ENCODE measurements at regions of chr22 and their contacts with region 1.

Region 1: DNA sequence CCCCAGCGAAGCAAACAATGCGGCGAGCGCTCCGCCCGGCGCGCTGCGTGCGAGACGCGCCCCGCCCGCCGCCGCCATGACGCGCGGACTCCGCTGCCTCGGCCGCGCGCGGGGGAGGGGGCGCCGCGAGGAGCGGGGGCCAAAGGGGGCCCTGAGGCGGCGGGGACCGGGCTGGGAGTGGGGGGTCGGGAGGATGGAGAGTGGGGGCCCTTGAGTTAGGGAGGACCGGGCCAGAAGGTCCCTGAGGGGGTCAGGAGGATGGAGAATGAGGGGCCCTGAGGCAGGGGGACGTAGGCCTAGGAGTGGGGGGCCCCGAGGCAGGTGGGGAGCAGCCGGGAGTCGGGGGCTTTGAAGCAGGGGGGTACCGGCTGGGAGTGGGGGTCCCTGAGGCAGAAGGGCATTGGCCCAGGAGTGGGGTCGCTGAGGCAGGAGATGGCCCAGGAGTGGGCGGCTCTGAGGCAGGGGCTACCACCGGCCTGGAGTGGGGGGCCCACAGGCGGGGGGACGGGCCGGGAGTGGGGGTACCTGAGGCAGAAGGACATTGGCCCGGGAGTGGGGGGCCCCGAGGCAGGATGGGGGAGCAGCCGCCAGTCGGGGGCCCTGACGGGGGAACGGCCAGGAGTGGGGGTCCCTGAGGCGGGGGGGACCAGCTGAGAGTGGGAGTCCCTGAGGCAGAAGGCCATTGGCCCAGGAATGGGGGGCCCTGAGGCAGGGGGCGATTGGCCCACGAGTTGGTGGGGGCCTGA is at the start of gene BRD1:
- DNase-seq: peak; percentile 46
- H3K4me3 Mint-ChIP-seq: peak within 1 kb of the TSS; percentile 91
- H3K27ac Mint-ChIP-seq: peak within 1 kb of the TSS; percentile 89
- H3K4me1 Mint-ChIP-seq: peaks cover 40% of the 10 kb centered on the region
- H3K27me3 Mint-ChIP-seq: no peaks in the 10 kb centered on the region
- total RNA-seq, gene BRD1: 41.3 and 46.2 TPM in 2 replicates

Region 2: DNA sequence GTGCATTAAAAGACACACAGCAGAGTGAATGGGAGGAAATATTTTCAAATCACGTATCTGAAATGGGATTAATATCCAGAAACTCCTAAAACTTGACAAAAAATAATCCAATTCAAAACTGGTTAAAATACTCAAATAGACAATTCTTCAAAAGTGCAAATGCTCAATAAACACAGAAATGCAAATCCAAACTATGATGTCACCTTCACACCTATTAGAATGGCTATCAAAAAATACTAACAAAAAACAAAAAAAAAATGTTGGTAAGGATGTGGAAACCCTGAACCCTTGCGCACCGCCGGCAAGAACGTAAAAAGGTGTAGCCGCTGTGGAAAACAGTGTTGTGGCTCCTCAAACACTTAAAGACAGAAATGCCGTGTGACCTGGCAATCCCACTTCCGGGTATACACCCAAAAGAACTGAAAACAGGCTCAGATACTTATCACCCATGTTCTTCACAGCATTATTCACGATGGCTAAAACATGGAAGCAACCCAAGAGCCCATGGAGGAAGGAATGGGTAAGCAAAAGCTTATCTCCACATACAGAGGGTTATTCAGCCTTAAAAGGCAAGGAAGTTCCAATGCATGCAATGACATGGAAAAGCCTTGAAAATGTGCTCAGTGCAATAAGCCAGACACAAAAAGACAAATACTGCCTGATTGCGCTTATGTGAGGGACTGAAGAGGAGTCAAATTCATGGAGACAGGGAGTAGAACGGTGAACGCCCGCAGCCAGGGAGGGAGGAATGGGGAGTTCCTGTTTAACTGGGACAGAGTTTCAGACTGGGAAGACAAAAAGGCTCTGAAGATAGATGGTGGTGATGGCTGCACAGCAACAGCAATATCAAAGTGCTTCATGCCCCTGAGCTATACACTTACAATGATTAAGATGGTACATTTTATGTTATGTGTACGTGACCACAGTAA is 20.0 kb before region 1 on chr22:
- intact Hi-C with region 1: no loop called
- DNase-seq: peak; percentile 60
- H3K4me3 Mint-ChIP-seq: peak overlapping the region; percentile 11
- H3K27ac Mint-ChIP-seq: peak overlapping the region; percentile 66
- H3K4me1 Mint-ChIP-seq: peaks cover 59% of the 10 kb centered on the region
- H3K27me3 Mint-ChIP-seq: no peaks in the 10 kb centered on the region

Region 3: GRCh38 chr22:49867303-49868265 is 39.6 kb after region 1 on chr22:
- intact Hi-C with region 1: loop called (anchors 5 kb)
- DNase-seq: no peak
- H3K4me3 Mint-ChIP-seq: peak overlapping the region; percentile 42
- H3K27ac Mint-ChIP-seq: peak overlapping the region; percentile 91
- H3K4me1 Mint-ChIP-seq: peaks cover 57% of the 10 kb centered on the region
- H3K27me3 Mint-ChIP-seq: no peaks in the 10 kb centered on the region

Measured in activated T-helper 2 cell treated with anti-CD3 and anti-CD28 coated beads, Interferon-gamma antibody, Interleukin-2, Interleukin-4, amounts not matched to agents 10 μg/mL and 5 μg/mL and 100 μg/mL, durations not matched to agents 14 hours and 24 hours and 36 hours (primary cell).